Heart right ventricle (tissue), 16 donors: ENCODE measurements at regions of chr1 and their contacts with region 1.

Region 1: GRCh38 chr1:147771231-147772125 is 11.1 kb upstream of the GJA5 start:
- DNase-seq: peak; percentile 77 to 79
- ATAC-seq: peak; percentile 84 to 98 (median 95)
- H3K4me3 ChIP-seq: peak overlapping the region in 9 of 10 donors; percentile 15 to 47 (median 31)
- H3K27ac ChIP-seq: peak overlapping the region in 8 of 10 donors; percentile 37 to 73 (median 62)
- H3K4me1 ChIP-seq: peaks cover 0 to 77% (median 50%) of the 10 kb centered on the region in 9 donors
- H3K27me3 ChIP-seq: no peaks in the 10 kb centered on the region
- CTCF ChIP-seq: no peak

Region 2: GRCh38 chr1:147723691-147724323 is 47.7 kb before region 1 on chr1:
- intact Hi-C with region 1: loop called in 1 of 10 experiments (anchors 5 kb)
- DNase-seq: peak; percentile 47 to 48
- ATAC-seq: peak; percentile 89 to 96 (median 94)
- H3K4me3 ChIP-seq: no peak overlapping the region
- H3K27ac ChIP-seq: no peak overlapping the region
- H3K4me1 ChIP-seq: peaks cover 0 to 5% (median 0%) of the 10 kb centered on the region in 9 donors
- H3K27me3 ChIP-seq: no peaks in the 10 kb centered on the region
- CTCF ChIP-seq: peak; percentile 48 to 85 (median 68)

Region 3: DNA sequence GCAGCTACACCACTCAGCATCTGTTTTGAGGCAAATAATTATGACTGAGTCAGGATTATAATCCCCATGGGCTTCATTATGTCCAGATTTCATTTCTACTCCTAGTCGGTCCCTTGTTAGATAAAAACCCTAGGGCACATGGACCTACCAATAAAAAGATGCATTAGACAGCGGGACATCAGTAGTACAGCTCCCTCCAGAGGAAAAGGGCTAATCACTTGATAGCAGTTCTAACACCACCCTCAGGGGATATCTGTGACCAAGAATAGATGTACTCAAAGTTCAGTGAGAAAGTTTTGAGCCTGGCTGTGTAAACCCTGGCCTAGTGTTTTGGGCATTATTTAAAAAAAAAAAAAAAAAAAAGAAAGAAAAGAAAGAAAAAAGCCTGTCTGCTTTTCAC is 141.1 kb after region 1 on chr1:
- intact Hi-C with region 1: no loop called
- DNase-seq: no peak
- ATAC-seq: no peak
- H3K4me3 ChIP-seq: no peak overlapping the region
- H3K27ac ChIP-seq: no peak overlapping the region
- H3K4me1 ChIP-seq: no peaks in the 10 kb centered on the region
- H3K27me3 ChIP-seq: peaks cover 0 to 30% (median 3%) of the 10 kb centered on the region in 7 donors
- CTCF ChIP-seq: no peak